ENCODE measurements at regions of chr6 and their contacts with region 1.

Region 1: GRCh38 chr6:76861403-76861802 is 601.9 kb downstream of the HTR1B start:
- DNase-seq: no peak
- H3K4me3 ChIP-seq: no peak overlapping the region
- H3K27ac ChIP-seq: no peak overlapping the region
- H3K4me1 ChIP-seq: no peaks in the 10 kb centered on the region
- H3K27me3 ChIP-seq: no peaks in the 10 kb centered on the region
- CTCF ChIP-seq: peak in 4 of 5 experiments; percentile 15 to 45 (median 28)
- EP300 ChIP-seq: no peak
- POLR2A ChIP-seq: no peak

Region 2: DNA sequence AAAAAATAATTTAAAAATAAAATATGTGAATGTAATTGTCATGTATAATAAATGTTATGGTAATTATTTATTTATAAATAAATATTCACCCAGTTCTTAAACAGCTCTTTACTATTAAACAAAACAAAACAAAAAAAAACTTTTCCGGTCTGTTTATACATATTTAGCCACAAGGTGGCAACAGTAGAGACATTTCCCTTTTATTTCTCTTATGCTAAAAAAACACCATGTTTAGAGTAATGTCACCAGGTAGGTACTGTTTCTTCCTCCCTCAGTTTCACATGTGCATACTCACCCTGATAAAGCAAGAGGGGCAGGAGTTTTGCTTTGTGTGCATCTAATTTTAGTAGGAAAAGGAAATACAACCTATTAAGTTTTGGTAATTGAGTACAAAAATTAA is 178.6 kb before region 1 on chr6:
- in situ Hi-C with region 1: loop called in 2 of 4 experiments (anchors 25 kb)
- intact Hi-C with region 1: no loop called
- DNase-seq: no peak
- H3K4me3 ChIP-seq: no peak overlapping the region
- H3K27ac ChIP-seq: no peak overlapping the region
- H3K4me1 ChIP-seq: no peaks in the 10 kb centered on the region
- H3K27me3 ChIP-seq: no peaks in the 10 kb centered on the region
- CTCF ChIP-seq: peak; percentile 18 to 39 (median 34)
- EP300 ChIP-seq: no peak
- POLR2A ChIP-seq: no peak